H1 (cell line): ENCODE measurements at regions of chr1 and their contacts with region 1.

Region 1: DNA sequence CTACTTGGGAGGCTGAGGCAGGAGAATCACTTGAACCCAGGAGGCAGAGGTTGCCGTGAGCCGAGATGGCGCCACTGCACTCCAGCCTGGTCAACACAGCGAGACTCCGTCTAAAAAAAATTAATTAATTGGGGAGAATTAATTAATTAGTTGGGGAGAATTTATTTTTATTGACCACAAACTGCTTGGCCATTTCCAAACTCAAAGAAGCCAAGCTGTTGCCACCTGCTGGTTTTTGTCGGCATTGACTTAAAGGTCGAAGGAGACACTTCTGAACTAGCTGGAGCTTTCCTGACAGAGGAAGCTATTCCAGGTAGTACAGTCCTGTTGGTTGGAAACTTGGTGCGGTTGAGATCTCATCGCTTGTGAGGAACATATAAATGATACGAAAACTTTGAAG is 13.1 kb downstream of the MAP1LC3C start:
- DNase-seq: peak in 1 of 2 experiments; percentile 68
- H3K4me3 ChIP-seq: no peak overlapping the region
- H3K27ac ChIP-seq: no peak overlapping the region
- H3K4me1 ChIP-seq: no peaks in the 10 kb centered on the region
- H3K27me3 ChIP-seq: no peaks in the 10 kb centered on the region
- CTCF ChIP-seq: peak in 2 of 3 experiments; percentile 55 to 61; a peak in 3 of 4 replicates
- EP300 ChIP-seq: no peak
- POLR2A ChIP-seq: no peak
- RAD21 ChIP-seq: peak; percentile 50 to 62

Region 2: GRCh38 chr1:241895013-241895412 is 90.8 kb before region 1 on chr1:
- CTCF ChIA-PET with region 1: interaction called, 71 read pairs
- POLR2A ChIA-PET with region 1: interaction called, 4 read pairs
- DNase-seq: no peak
- H3K4me3 ChIP-seq: no peak overlapping the region
- H3K27ac ChIP-seq: no peak overlapping the region
- H3K4me1 ChIP-seq: no peaks in the 10 kb centered on the region
- H3K27me3 ChIP-seq: no peaks in the 10 kb centered on the region
- CTCF ChIP-seq: no peak
- EP300 ChIP-seq: no peak
- POLR2A ChIP-seq: no peak
- RAD21 ChIP-seq: no peak

Region 3: DNA sequence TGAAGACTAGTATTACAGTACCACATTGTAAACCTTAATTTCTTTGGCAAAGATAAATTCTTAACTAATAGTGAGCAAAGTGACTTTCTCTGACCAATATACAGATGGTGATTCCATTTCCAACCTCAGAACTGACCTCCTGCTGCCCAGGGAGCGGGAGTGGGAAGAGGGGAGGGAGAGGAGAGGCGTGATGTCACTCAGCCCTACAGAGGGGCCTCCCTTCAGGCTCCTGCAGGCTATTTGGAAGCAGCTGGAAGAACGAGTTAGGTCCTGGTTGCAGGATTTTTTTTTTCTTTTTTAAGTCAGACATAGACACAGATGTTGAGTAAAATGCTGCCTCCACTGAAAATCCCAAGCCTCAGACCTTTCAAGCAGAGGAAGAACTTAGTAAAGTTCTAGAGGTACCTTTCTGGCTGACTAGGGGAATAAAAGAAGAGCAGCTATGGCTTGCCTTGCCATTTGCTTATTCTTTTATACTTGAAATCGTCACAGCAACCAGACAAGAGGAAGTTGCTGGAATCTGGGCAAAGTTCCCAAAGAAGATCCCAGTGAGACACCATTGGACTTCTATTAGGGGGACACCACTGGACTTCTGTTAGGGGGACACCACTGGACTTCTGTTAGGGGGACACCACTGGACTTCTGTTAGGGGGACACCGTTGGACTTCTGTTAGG is 83.3 kb before region 1 on chr1:
- CTCF ChIA-PET with region 1: interaction called, 71 read pairs
- POLR2A ChIA-PET with region 1: no interaction called
- DNase-seq: no peak
- H3K4me3 ChIP-seq: no peak overlapping the region
- H3K27ac ChIP-seq: no peak overlapping the region
- H3K4me1 ChIP-seq: no peaks in the 10 kb centered on the region
- H3K27me3 ChIP-seq: no peaks in the 10 kb centered on the region
- CTCF ChIP-seq: no peak
- EP300 ChIP-seq: no peak
- POLR2A ChIP-seq: no peak
- RAD21 ChIP-seq: no peak

Region 4: DNA sequence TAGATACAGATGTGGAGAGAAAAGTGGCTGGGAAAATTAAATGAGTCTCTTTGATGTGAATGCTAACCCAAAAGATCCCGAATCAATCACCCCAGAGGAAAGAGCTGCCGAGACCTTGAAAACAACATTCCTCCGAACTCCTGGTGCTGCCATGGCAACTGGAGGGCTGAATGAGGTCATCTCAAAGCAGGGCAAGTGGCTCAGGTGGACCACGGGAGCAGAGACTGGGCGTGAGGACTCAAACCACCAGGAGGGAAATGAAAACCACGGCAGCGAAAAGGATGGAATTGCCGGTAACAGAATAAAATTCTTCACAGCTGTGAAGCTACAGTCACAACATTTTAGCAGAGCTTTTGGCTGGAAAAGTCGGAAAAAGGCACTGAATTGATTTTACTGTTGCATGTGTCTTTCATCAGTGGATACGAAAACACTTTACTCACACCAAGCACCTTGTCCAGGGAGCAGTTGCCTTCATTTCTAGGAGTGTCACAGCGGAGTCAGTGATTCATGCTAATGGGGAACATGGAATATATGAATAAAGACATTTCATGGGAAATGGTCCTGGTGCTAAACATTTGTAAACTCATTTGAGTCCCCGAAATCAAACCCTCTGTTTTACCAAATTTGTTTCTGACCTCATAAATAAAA is 51.5 kb before region 1 on chr1:
- CTCF ChIA-PET with region 1: interaction called, 15 read pairs
- POLR2A ChIA-PET with region 1: no interaction called
- DNase-seq: peak; percentile 13 to 57
- H3K4me3 ChIP-seq: no peak overlapping the region
- H3K27ac ChIP-seq: no peak overlapping the region
- H3K4me1 ChIP-seq: peaks cover 0 to 4% (median under 1%) of the 10 kb centered on the region in 4 experiments; a peak in 2 of 7 replicates
- H3K27me3 ChIP-seq: no peaks in the 10 kb centered on the region
- CTCF ChIP-seq: no peak
- EP300 ChIP-seq: no peak
- POLR2A ChIP-seq: no peak
- RAD21 ChIP-seq: no peak

Region 5: DNA sequence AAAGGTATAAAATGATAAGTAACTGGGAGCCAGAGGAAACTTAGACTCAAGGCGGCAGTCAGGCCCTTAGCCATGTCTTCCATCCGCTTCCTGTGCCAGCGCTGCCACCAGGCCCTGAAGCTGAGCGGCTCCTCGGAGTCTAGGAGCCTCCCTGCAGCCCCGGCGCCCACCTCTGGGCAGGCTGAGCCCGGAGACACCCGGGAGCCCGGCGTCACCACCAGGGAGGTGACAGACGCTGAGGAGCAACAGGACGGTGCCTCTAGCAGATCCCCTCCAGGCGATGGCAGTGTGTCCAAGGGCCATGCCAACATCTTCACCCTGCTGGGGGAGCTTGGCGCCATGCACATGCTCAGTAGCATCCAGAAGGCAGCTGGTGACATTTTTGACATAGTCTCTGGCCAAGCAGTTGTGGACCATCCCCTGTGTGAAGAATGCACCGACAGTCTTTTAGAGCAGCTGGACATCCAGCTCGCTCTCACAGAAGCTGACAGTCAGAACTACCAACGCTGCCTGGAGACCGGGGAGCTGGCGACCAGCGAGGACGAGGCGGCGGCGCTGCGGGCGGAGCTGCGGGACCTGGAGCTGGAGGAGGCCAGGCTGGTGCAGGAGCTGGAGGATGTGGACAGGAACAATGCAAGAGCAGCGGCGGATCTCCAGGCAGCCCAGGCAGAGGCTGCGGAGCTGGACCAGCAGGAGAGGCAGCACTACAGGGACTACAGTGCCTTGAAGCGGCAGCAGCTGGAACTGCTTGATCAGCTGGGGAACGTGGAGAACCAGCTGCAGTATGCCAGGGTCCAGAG is 27.9 kb before region 1 on chr1 and contains the start of gene BECN2:
- CTCF ChIA-PET with region 1: interaction called, 14 read pairs
- POLR2A ChIA-PET with region 1: no interaction called
- DNase-seq: no peak
- H3K4me3 ChIP-seq: no peak within 1 kb of the TSS
- H3K27ac ChIP-seq: no peak within 1 kb of the TSS
- H3K4me1 ChIP-seq: no peaks in the 10 kb centered on the region
- H3K27me3 ChIP-seq: no peaks in the 10 kb centered on the region
- CTCF ChIP-seq: peak in 1 of 3 experiments; percentile 2; a peak in 2 of 4 replicates
- EP300 ChIP-seq: no peak
- POLR2A ChIP-seq: no peak
- RAD21 ChIP-seq: peak; percentile 30 to 35
- total RNA-seq, gene BECN2: not detected in 2 replicates

Region 6: DNA sequence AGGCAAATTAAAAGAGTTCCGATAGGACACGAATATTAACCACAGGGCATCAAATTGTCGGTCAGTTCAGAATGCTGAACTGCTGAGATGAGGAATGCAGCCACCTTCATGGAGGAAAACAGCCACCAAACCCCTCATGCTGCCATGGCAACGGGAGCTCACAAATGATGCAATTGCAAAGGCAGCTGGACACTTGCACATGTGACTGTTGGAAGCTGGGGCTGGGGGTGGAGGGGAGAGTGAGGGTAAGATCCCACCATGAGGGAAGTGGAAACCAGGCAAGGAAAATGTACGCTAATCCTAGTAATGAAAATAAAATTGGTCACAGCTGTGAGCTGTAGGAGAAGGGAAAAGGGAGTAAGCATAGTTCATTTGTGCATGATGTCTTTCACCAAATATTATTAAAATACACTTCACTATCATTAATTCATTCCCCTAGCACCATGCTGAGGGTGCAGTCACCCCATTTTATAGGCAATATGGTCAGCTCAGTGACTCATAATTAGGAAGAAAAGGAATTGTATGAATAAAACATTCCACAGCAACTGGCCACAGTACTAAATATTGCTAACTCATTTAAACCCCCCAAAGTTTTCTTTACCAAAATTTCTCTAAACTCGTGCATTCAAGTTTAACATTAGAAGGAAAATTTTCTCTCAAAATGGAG is 13.0 kb before region 1 on chr1:
- CTCF ChIA-PET with region 1: interaction called, 20 read pairs
- POLR2A ChIA-PET with region 1: no interaction called
- DNase-seq: no peak
- H3K4me3 ChIP-seq: no peak overlapping the region
- H3K27ac ChIP-seq: no peak overlapping the region
- H3K4me1 ChIP-seq: no peaks in the 10 kb centered on the region
- H3K27me3 ChIP-seq: no peaks in the 10 kb centered on the region
- CTCF ChIP-seq: no peak
- EP300 ChIP-seq: no peak
- POLR2A ChIP-seq: no peak
- RAD21 ChIP-seq: no peak

Region 7: DNA sequence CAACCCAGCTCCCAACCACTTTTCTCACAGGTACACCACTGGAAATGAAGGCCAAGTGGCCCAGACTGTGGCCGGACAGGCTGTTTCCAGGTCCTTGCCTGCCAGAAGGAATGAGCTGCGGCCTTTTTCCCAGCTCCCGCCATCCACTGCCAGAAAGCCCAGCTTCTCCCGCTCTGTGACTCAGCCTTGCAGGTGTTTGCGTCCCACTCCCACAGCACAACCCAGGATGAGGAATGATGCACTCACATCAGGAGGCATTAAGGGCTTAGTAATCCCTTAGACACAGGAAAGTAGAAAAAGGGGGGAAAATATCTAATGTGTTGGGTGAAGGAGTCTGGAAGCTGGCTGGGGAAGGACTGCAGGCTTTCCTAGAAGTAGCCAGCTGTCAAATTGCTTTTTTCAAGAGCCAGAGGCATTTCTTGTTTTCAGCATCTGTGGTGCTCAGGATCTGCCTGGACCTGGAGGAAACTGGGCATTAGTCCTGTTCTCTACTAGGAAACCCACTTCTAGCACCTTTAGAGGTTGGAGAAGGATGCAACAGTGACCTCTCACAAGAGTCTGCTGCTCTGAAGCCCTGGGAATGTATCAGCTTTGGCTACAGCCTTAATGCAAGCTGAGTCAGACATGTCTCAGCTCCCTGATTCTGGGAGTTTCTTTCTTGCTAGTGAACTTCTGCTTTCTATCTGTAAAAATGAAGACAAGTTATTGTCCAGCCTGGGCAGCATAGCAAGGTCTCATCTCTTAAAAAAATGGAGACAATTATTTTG is 26.3 kb after region 1 on chr1:
- CTCF ChIA-PET with region 1: interaction called, 10 read pairs
- POLR2A ChIA-PET with region 1: no interaction called
- DNase-seq: no peak
- H3K4me3 ChIP-seq: no peak overlapping the region
- H3K27ac ChIP-seq: no peak overlapping the region
- H3K4me1 ChIP-seq: peaks cover 0 to 4% (median under 1%) of the 10 kb centered on the region in 4 experiments; a peak in 2 of 7 replicates
- H3K27me3 ChIP-seq: no peaks in the 10 kb centered on the region; a peak in 1 of 7 replicates
- CTCF ChIP-seq: no peak
- EP300 ChIP-seq: no peak
- POLR2A ChIP-seq: no peak
- RAD21 ChIP-seq: no peak